Adrenal gland (tissue), 19 donors: ENCODE measurements at regions of chr14 and their contacts with region 1.

Region 1: GRCh38 chr14:61025251-61026223 is 44.5 kb downstream of the SLC38A6 start:
- DNase-seq: peak; percentile 50 to 85 (median 66)
- H3K4me3 ChIP-seq: no peak overlapping the region
- H3K27ac ChIP-seq: no peak overlapping the region
- H3K4me1 ChIP-seq: no peaks in the 10 kb centered on the region
- H3K27me3 ChIP-seq: no peaks in the 10 kb centered on the region
- CTCF ChIP-seq: peak; percentile 73 to 94 (median 83)
- POLR2A ChIP-seq: no peak

Region 2: GRCh38 chr14:60628892-60629291 is 396.6 kb before region 1 on chr14:
- intact Hi-C with region 1: loop called in 1 of 2 experiments (anchors 5 kb)
- DNase-seq: no peak
- H3K4me3 ChIP-seq: no peak overlapping the region
- H3K27ac ChIP-seq: no peak overlapping the region
- H3K4me1 ChIP-seq: no peaks in the 10 kb centered on the region
- H3K27me3 ChIP-seq: no peaks in the 10 kb centered on the region
- CTCF ChIP-seq: no peak
- POLR2A ChIP-seq: no peak

Region 3: DNA sequence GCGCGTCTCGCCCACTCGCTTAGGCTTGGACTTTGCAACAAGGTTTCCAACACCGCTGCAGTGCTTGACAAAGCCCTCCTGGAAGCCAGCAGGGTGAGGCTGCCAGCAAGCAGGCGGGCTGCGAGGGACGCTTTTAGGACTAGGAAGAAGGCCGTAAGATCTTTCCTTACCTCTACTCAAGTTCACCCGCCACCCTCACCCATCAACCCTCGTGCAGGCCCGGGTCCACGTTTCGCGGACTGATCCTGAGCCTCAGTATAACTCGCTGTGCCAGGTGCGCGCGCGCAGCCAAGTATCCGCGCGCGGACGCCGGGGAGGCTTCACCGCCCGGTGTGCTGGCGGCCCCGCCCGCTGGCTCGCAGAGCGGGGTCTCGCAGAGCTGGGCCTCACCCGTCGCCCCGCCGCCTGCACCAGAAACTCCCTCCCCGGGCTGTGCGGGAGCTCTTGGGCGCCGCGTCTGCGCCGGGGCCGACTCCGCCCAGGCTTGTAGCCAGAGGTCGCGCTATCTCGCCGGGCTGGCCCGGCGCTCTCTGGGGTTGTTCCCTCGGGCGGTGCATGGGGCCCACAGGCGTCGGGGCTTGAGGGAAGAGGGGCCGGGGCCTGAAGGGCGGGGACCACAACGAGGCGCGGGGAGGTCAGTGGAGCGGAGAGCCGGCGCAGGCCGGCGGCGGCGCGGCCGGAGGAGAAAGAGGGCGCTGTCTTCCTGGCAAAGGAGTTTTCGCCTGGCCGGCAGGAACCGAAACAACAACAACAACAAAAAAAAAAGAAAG is 368.7 kb before region 1 on chr14:
- intact Hi-C with region 1: loop called in 1 of 2 experiments (anchors 10 kb)
- DNase-seq: peak; percentile 53 to 70 (median 63)
- H3K4me3 ChIP-seq: peak overlapping the region in 2 of 4 donors; percentile 75 to 80
- H3K27ac ChIP-seq: peak overlapping the region in 3 of 5 donors; percentile 17 to 34 (median 19)
- H3K4me1 ChIP-seq: peaks cover 6 to 19% of the 10 kb centered on the region in 2 donors
- H3K27me3 ChIP-seq: peaks cover 38% of the 10 kb centered on the region
- CTCF ChIP-seq: peak; percentile 24 to 51 (median 36)
- POLR2A ChIP-seq: no peak

Region 4: GRCh38 chr14:61076556-61076955 is 51.0 kb after region 1 on chr14:
- intact Hi-C with region 1: no loop called
- DNase-seq: peak in 2 of 7 donors; percentile 16 to 17
- H3K4me3 ChIP-seq: no peak overlapping the region
- H3K27ac ChIP-seq: no peak overlapping the region
- H3K4me1 ChIP-seq: no peaks in the 10 kb centered on the region
- H3K27me3 ChIP-seq: no peaks in the 10 kb centered on the region
- CTCF ChIP-seq: no peak
- POLR2A ChIP-seq: no peak

Region 5: GRCh38 chr14:61252369-61253063 is 227.0 kb after region 1 on chr14:
- intact Hi-C with region 1: loop called in 1 of 2 experiments (anchors 10 kb)
- DNase-seq: peak; percentile 70 to 91 (median 83)
- H3K4me3 ChIP-seq: no peak overlapping the region
- H3K27ac ChIP-seq: no peak overlapping the region
- H3K4me1 ChIP-seq: peaks cover 6 to 7% of the 10 kb centered on the region in 2 donors
- H3K27me3 ChIP-seq: no peaks in the 10 kb centered on the region
- CTCF ChIP-seq: peak; percentile 75 to 90 (median 86)
- POLR2A ChIP-seq: no peak